WTC11 (cell line): ENCODE measurements at regions of chr6 and their contacts with region 1.

Region 1: DNA sequence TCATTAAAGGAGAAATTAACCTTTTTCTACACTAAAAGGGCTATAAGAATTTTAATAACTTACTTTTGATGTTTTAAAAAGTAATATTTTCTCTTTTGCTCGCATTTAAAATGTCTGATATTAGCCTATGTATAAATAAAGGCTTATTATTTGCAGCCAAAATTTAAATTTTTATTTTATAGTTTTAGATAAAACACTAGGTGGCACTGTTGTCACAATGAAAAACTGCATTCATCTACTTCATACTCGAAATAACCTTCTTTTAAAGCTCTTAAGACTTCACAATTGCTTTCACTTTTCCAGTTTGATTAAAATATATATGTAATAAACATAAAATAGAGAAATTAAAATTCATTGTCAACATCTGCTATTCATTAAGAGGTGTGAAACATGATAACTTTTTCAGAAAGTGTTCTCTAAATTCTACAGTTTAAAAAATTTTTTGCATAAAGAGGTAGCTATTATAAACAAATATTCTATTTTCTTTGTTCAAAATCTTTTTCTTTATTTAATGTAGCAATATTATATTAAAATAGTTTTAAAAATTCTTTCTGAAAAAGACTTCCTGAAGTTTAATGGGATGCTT is 78.8 kb upstream of the DEFB112 start:
- DNase-seq: no peak
- ATAC-seq: no peak
- H3K4me3 Mint-ChIP-seq: no peak overlapping the region
- H3K27ac Mint-ChIP-seq: no peak overlapping the region
- H3K4me1 Mint-ChIP-seq: no peaks in the 10 kb centered on the region
- H3K27me3 Mint-ChIP-seq: no peaks in the 10 kb centered on the region
- CTCF ChIP-seq: no peak

Region 2: DNA sequence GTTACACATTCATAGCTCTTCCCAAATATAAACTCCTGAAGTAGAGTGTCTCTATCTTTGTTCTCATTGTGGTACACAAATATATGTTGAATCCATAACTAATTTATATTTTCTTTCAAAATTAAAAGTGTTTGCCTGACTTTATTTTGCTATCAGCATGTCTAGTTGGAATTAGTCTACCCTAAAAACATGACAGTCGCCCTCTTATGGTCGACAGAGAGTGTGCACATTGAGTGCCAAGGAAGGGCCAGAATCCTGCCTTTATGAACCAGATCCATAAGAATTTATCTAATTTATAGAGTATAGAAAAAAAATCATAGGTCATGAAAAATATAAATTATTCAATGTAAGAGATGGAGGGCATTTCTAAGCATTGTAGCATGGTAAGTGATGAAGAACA is 66.5 kb before region 1 on chr6:
- CTCF ChIA-PET with region 1: no interaction called
- POLR2A ChIA-PET with region 1: no interaction called
- DNase-seq: no peak
- ATAC-seq: peak; percentile 58
- H3K4me3 Mint-ChIP-seq: no peak overlapping the region
- H3K27ac Mint-ChIP-seq: no peak overlapping the region
- H3K4me1 Mint-ChIP-seq: peaks cover 3% of the 10 kb centered on the region; the same call in 1 of the 2 replicates
- H3K27me3 Mint-ChIP-seq: no peaks in the 10 kb centered on the region; the same call in 1 of the 2 replicates
- CTCF ChIP-seq: peak; percentile 47

Region 3: GRCh38 chr6:50145125-50145524 is 16.6 kb after region 1 on chr6:
- CTCF ChIA-PET with region 1: interaction called, 17 read pairs
- POLR2A ChIA-PET with region 1: no interaction called
- DNase-seq: no peak
- ATAC-seq: no peak; the same call in 1 of the 2 replicates
- H3K4me3 Mint-ChIP-seq: no peak overlapping the region
- H3K27ac Mint-ChIP-seq: no peak overlapping the region
- H3K4me1 Mint-ChIP-seq: no peaks in the 10 kb centered on the region
- H3K27me3 Mint-ChIP-seq: no peaks in the 10 kb centered on the region; the same call in 1 of the 2 replicates
- CTCF ChIP-seq: peak; percentile 49; the same call in 1 of the 2 replicates

Region 4: DNA sequence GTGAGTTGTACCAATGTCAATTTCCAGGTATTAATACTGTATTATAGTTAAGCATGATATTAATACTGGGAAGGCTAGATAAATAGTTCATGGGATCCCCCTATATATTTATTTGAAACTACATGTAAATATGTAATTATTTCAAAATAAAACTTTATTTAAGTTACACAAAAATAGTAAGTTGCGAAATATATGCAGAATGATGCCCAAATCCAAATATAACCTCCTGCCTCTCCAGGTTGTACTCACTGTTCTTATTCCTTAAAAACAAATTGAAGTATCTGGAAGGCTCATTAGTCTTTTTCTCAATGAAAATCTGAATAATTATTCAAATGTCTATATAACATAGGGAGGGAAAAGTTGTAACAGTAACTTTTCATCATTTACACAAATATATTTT is 83.1 kb after region 1 on chr6:
- CTCF ChIA-PET with region 1: no interaction called
- POLR2A ChIA-PET with region 1: no interaction called
- DNase-seq: no peak
- ATAC-seq: no peak
- H3K4me3 Mint-ChIP-seq: no peak overlapping the region
- H3K27ac Mint-ChIP-seq: no peak overlapping the region
- H3K4me1 Mint-ChIP-seq: no peaks in the 10 kb centered on the region
- H3K27me3 Mint-ChIP-seq: peaks cover 3% of the 10 kb centered on the region; the same call in 1 of the 2 replicates
- CTCF ChIP-seq: no peak